ENCODE measurements at regions of chr13 and their contacts with region 1.

Region 1: GRCh38 chr13:39016787-39017186 is 21.1 kb downstream of the PROSER1 start:
- DNase-seq: peak; percentile 56
- H3K4me3 ChIP-seq: no peak overlapping the region
- H3K27ac ChIP-seq: no peak overlapping the region
- H3K4me1 ChIP-seq: no peaks in the 10 kb centered on the region
- H3K27me3 ChIP-seq: no peaks in the 10 kb centered on the region
- CTCF ChIP-seq: peak; percentile 81

Region 2: DNA sequence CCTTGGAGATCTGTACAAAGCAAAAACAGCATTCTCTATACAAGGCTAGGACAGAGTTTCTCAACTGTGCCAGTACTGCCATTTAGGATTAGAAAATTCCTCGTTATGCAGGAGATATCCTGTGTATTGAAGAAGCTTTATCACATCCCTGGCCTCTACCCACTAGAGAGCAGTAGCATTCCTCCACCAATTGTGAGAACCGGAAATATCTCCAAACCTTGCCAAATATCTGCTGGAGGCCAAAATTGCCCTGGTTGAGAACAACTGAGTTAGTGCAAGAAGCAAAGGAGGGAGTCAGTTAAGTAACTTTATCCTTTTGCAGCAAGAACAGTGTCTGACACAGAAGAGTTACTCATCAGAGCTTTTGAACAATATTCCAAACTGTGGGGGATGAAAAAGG is 346.2 kb before region 1 on chr13:
- CTCF ChIA-PET with region 1: no interaction called
- POLR2A ChIA-PET with region 1: interaction called, 11 read pairs
- intact Hi-C with region 1: no loop called
- DNase-seq: peak; percentile 97
- H3K4me3 ChIP-seq: no peak overlapping the region
- H3K27ac ChIP-seq: peak overlapping the region; percentile 61
- H3K4me1 ChIP-seq: peaks cover 59% of the 10 kb centered on the region
- H3K27me3 ChIP-seq: no peaks in the 10 kb centered on the region
- CTCF ChIP-seq: peak; percentile 87

Region 3: GRCh38 chr13:38990693-38991092 is 26.1 kb before region 1 on chr13 and contains the start of gene STOML3:
- CTCF ChIA-PET with region 1: no interaction called
- POLR2A ChIA-PET with region 1: interaction called, 10 read pairs
- intact Hi-C with region 1: no loop called
- DNase-seq: peak; percentile 42
- H3K4me3 ChIP-seq: no peak within 1 kb of the TSS
- H3K27ac ChIP-seq: no peak within 1 kb of the TSS
- H3K4me1 ChIP-seq: no peaks in the 10 kb centered on the region
- H3K27me3 ChIP-seq: no peaks in the 10 kb centered on the region
- CTCF ChIP-seq: no peak
- total RNA-seq, gene STOML3: not detected in 2 replicates

Region 4: DNA sequence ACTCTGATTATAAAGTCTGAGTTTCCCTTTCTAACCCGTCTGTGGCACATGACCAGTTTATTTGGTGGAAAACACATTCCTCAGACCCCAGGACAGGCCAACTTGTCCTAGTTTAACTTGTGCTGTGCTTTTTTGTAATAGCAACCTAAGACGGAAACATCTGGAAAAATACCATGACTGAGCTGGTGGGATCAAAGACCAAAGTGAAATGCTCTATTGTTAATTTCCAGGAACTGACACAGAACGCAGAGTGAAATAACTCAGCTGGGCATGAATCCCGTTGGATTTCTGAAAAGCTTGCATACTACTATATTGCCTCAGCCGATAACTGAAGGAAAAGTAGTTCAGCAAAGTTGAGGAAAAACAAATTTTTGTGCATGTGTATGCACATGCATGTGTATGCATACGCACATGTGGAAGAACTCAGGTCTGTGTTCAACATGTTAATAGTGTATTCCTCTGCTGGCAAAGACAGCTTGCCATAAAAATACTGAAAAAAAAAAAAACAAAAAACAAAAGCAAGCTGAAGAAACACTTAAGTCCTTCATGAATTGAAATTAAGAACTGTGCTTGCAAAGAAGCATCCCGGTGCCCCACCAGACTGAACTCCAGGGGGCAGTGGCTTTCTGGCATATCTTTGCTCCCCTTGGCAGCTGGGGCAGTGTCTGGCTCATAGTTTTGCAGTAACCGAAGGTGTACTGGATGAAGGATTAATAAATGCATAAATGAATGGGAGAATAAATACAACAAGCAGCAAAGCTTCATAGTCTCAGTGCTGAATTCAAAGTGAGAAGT is 398.4 kb after region 1 on chr13:
- CTCF ChIA-PET with region 1: no interaction called
- POLR2A ChIA-PET with region 1: no interaction called
- intact Hi-C with region 1: no loop called
- DNase-seq: peak; percentile 83
- H3K4me3 ChIP-seq: no peak overlapping the region
- H3K27ac ChIP-seq: peak overlapping the region; percentile 56
- H3K4me1 ChIP-seq: peaks cover 99% of the 10 kb centered on the region
- H3K27me3 ChIP-seq: no peaks in the 10 kb centered on the region
- CTCF ChIP-seq: peak; percentile 82

Measured in A673 (cell line).